B cell (primary cell): ENCODE measurements at regions of chr18 and their contacts with region 1.

Region 1: DNA sequence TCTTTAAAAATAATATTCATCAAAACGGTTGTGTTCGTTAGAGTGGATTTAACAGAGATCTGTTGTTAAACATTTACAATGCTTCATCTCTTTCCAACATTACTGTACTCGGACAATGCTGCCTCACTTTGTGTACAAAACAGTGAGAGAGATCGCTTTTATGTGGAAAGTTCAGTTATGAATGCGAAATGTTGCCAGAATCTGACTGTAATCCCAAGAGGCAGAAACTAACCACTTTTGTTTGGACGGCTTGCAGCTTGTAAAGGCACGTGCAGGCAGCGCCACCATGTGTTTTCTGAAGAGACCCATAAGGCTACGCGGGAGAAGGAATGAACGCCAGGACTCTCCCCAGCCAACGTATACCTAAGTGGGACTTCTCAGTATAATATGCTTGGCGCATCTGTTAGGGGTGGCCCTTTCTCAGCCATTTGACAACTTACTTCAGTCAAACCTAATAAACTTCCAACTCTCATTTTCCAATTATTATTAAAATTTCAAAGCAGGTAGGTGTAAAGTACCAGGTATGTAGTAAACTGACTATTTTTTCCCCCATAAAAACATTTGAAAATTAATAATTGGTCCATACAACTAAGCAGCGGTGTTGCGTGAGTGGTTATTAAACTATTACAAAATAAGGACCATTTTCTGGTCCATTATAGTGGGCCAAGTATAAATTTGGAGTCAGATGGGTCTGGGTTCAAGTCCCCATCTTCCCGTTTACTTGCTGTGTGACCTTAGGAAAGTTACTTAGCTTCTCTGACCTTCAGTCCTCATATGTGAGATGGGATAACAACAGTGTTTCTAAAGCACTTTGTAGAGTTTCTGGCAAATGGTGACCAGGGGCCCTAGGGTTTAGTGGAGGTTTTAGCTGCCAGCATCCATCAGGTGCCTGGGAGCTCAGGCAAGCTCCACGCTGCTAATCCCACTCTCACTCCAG is 5.6 kb upstream of the NAPG start:
- DNase-seq: peak; percentile 84
- ATAC-seq: peak; percentile 92
- H3K4me3 ChIP-seq: no peak overlapping the region
- H3K4me3 Mint-ChIP-seq: peak overlapping the region; percentile 29
- H3K27ac ChIP-seq: no peak overlapping the region
- H3K27ac Mint-ChIP-seq: no peak overlapping the region
- H3K4me1 ChIP-seq: peaks cover 9 to 10% of the 10 kb centered on the region in 2 donors
- H3K4me1 Mint-ChIP-seq: peaks cover 10% of the 10 kb centered on the region
- H3K27me3 ChIP-seq: peaks cover 0 to 3% (median 1%) of the 10 kb centered on the region in 4 experiments
- H3K27me3 Mint-ChIP-seq: peaks cover 16% of the 10 kb centered on the region
- CTCF ChIP-seq: peak; percentile 82

Region 2: DNA sequence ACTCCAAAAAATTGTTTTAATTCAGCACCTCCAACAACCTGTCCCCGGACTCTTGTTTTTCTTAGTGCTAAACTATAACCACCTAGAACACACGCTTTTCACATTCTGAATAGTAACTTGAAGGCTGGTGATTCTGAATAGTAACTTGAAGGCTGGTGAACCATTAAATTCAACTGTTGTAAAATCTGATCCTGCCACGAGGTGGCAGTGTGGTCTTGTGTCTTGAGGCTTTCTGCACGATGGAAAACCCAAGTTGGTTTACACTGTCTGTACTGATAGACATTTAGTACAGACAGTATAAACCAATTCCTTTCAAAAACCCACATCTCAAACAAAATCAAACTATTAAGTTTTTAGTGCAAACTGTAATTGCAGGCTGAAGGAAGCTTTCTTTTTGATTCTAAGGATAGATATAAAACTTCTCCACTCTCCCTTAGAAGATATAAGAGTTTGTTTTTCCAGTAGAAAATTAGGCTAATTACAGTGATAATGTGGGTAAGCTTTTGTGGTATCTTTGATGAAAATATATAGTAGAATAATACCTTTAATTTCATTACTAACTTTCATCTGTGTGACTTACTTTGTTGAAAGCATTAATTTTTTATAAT is 548.9 kb before region 1 on chr18:
- CTCF ChIA-PET with region 1: interaction called, 174 read pairs
- POLR2A ChIA-PET with region 1: no interaction called
- intact Hi-C with region 1: loop called (anchors 1 kb)
- DNase-seq: peak; percentile 84
- ATAC-seq: peak; percentile 81
- H3K4me3 ChIP-seq: no peak overlapping the region
- H3K4me3 Mint-ChIP-seq: no peak overlapping the region
- H3K27ac ChIP-seq: no peak overlapping the region
- H3K27ac Mint-ChIP-seq: no peak overlapping the region
- H3K4me1 ChIP-seq: peaks cover 5 to 17% of the 10 kb centered on the region in 2 donors
- H3K4me1 Mint-ChIP-seq: peaks cover 6% of the 10 kb centered on the region
- H3K27me3 ChIP-seq: peaks cover 0 to 35% (median 19%) of the 10 kb centered on the region in 4 experiments
- H3K27me3 Mint-ChIP-seq: peaks cover 30% of the 10 kb centered on the region
- CTCF ChIP-seq: peak; percentile 89

Region 3: GRCh38 chr18:10032331-10033015 is 487.8 kb before region 1 on chr18:
- CTCF ChIA-PET with region 1: interaction called, 41 read pairs
- POLR2A ChIA-PET with region 1: no interaction called
- intact Hi-C with region 1: no loop called
- DNase-seq: peak; percentile 72
- ATAC-seq: peak; percentile 91
- H3K4me3 ChIP-seq: peak overlapping the region; percentile 26 to 71 (median 65)
- H3K4me3 Mint-ChIP-seq: peak overlapping the region; percentile 76
- H3K27ac ChIP-seq: peak overlapping the region; percentile 59 to 80
- H3K27ac Mint-ChIP-seq: peak overlapping the region; percentile 62
- H3K4me1 ChIP-seq: peaks cover 11 to 15% of the 10 kb centered on the region in 2 donors
- H3K4me1 Mint-ChIP-seq: peaks cover 13% of the 10 kb centered on the region
- H3K27me3 ChIP-seq: no peaks in the 10 kb centered on the region
- H3K27me3 Mint-ChIP-seq: peaks cover 3% of the 10 kb centered on the region
- CTCF ChIP-seq: peak; percentile 28

Region 4: GRCh38 chr18:10432781-10433180 is 87.5 kb before region 1 on chr18:
- CTCF ChIA-PET with region 1: no interaction called
- POLR2A ChIA-PET with region 1: no interaction called
- intact Hi-C with region 1: no loop called
- DNase-seq: no peak
- ATAC-seq: no peak
- H3K4me3 ChIP-seq: no peak overlapping the region
- H3K4me3 Mint-ChIP-seq: no peak overlapping the region
- H3K27ac ChIP-seq: no peak overlapping the region
- H3K27ac Mint-ChIP-seq: no peak overlapping the region
- H3K4me1 ChIP-seq: no peaks in the 10 kb centered on the region
- H3K4me1 Mint-ChIP-seq: no peaks in the 10 kb centered on the region
- H3K27me3 ChIP-seq: no peaks in the 10 kb centered on the region
- H3K27me3 Mint-ChIP-seq: no peaks in the 10 kb centered on the region
- CTCF ChIP-seq: no peak

Region 5: DNA sequence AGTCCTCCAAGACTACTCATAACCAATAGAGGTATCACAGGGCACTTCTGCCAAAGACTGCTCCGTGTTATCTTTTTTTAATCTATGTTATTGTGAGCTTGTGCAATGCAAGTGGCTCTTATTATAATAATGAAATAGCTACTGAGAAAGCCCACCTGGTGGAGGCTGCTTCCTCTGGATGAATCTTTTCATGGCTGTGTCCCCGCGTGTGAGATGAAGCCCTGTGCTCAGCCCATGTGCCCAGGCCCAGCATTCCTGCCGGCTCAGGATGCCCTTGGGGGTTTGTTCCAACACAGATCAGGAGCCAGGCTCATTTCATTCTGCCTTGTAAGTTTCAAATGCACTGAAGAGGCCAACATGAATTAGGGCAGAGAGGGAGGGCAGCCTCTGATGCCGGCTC is 47.1 kb before region 1 on chr18:
- CTCF ChIA-PET with region 1: no interaction called
- POLR2A ChIA-PET with region 1: no interaction called
- intact Hi-C with region 1: no loop called
- DNase-seq: no peak
- ATAC-seq: no peak
- H3K4me3 ChIP-seq: no peak overlapping the region
- H3K4me3 Mint-ChIP-seq: no peak overlapping the region
- H3K27ac ChIP-seq: no peak overlapping the region
- H3K27ac Mint-ChIP-seq: no peak overlapping the region
- H3K4me1 ChIP-seq: peaks cover 31 to 34% of the 10 kb centered on the region in 2 donors
- H3K4me1 Mint-ChIP-seq: peaks cover 26% of the 10 kb centered on the region
- H3K27me3 ChIP-seq: no peaks in the 10 kb centered on the region
- H3K27me3 Mint-ChIP-seq: no peaks in the 10 kb centered on the region
- CTCF ChIP-seq: no peak

Region 6: DNA sequence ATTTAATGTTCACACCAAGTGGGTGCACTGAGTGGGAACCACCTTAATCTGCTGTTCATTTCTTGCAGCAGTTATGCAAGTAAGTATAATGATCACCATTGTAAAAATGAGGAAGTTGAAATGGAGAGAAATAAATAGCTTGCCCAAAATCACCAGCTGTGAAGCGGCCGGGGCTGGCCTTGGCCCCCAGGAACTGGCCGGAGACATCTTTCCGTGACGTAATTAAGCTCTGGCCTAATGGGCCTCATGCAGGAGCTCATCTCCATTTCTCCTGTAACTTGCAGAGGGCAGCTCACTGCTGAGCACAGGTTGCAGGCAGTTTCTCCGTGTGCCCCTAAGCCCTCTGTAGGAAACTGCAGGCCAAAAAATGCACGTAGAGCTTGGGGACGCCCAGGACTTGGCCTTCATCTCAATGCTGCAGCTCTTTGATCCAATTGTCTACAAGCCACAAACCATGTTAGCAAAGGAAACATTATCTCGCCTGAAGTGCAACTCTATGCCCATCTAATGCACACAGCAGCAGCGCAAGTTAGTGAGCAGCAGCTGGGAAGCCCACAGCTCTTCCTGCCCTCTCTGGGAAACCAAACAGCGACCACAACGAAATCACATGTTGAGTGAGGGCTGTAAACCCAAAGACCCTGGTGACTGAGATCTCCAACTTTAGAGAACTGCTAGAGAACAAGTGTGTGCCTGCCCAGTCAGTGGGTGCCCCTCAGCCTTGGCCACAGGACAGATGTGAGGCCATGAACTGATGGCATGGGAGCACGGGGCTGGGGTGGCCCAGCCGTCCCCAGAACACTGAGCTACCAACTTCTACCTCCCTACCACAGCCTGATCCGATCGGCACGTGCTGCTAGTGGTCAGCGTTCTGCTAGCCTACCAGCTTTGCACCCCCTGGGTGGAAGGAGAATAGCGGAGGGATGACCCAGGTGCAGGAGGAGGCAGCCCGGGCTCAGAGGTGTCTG is 37.0 kb before region 1 on chr18:
- CTCF ChIA-PET with region 1: interaction called, 10 read pairs
- POLR2A ChIA-PET with region 1: no interaction called
- intact Hi-C with region 1: loop called (anchors 5 kb)
- DNase-seq: peak; percentile 68
- ATAC-seq: peak; percentile 80
- H3K4me3 ChIP-seq: peak overlapping the region in 3 of 5 experiments; percentile 15 to 42 (median 22)
- H3K4me3 Mint-ChIP-seq: peak overlapping the region; percentile 69
- H3K27ac ChIP-seq: peak overlapping the region; percentile 66 to 69
- H3K27ac Mint-ChIP-seq: peak overlapping the region; percentile 94
- H3K4me1 ChIP-seq: peaks cover 61 to 64% of the 10 kb centered on the region in 2 donors
- H3K4me1 Mint-ChIP-seq: peaks cover 66% of the 10 kb centered on the region
- H3K27me3 ChIP-seq: no peaks in the 10 kb centered on the region
- H3K27me3 Mint-ChIP-seq: no peaks in the 10 kb centered on the region
- CTCF ChIP-seq: no peak

Region 7: GRCh38 chr18:10508591-10508990 is 11.7 kb before region 1 on chr18:
- CTCF ChIA-PET with region 1: interaction called, 20 read pairs
- POLR2A ChIA-PET with region 1: no interaction called
- intact Hi-C with region 1: no loop called
- DNase-seq: no peak
- ATAC-seq: no peak
- H3K4me3 ChIP-seq: no peak overlapping the region
- H3K4me3 Mint-ChIP-seq: no peak overlapping the region
- H3K27ac ChIP-seq: no peak overlapping the region
- H3K27ac Mint-ChIP-seq: no peak overlapping the region
- H3K4me1 ChIP-seq: no peaks in the 10 kb centered on the region
- H3K4me1 Mint-ChIP-seq: no peaks in the 10 kb centered on the region
- H3K27me3 ChIP-seq: peaks cover 0 to 8% (median 0%) of the 10 kb centered on the region in 4 experiments
- H3K27me3 Mint-ChIP-seq: peaks cover 24% of the 10 kb centered on the region
- CTCF ChIP-seq: no peak